GM13976 (cell line): ENCODE measurements at regions of chr1 and their contacts with region 1.

Region 1: GRCh38 chr1:54671985-54672608 is 30.5 kb downstream of the MROH7 start:
- DNase-seq: peak; percentile 80
- CTCF ChIP-seq: peak; percentile 69

Region 2: DNA sequence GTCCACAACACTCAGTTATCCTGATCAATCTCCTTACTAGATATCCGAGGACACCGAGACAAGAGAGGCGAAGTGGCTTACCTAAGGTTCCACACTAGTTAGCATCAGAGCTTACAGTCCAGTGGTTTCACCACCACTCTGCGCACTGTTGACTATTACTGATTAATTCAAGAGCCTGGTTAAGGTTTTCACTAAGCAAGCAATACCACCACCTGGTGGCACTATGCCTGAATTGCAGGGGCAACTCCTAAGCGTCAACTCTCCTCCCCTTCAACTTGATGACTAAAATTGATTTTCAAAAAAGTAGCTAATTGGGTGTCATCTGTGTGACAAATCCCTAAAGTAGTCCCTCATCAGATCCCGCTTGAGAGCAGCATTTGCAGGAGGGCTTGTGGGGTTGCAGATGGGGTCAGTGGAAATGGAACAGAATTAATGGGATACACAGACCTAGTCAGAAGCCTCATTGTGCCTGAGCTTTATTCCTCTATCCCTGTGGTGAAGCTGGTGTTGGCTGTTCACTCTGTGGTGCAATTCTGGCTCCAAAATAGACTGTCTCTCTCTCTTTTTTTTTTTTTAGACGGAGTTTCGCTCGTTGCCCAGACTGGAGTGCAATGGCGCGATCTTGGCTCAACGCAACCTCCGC is 119.9 kb after region 1 on chr1:
- in situ Hi-C with region 1: loop called (anchors 10 kb)
- DNase-seq: no peak
- CTCF ChIP-seq: peak; percentile 8